ENCODE measurements at regions of chr5 and their contacts with region 1.

Region 1: GRCh38 chr5:77963795-77964194 is 187.7 kb upstream of the TBCA start:
- DNase-seq: no peak
- H3K4me3 ChIP-seq: no peak overlapping the region
- H3K27ac ChIP-seq: no peak overlapping the region
- H3K4me1 ChIP-seq: no peaks in the 10 kb centered on the region
- H3K27me3 ChIP-seq: no peaks in the 10 kb centered on the region
- CTCF ChIP-seq: no peak
- POLR2A ChIP-seq: no peak

Region 2: DNA sequence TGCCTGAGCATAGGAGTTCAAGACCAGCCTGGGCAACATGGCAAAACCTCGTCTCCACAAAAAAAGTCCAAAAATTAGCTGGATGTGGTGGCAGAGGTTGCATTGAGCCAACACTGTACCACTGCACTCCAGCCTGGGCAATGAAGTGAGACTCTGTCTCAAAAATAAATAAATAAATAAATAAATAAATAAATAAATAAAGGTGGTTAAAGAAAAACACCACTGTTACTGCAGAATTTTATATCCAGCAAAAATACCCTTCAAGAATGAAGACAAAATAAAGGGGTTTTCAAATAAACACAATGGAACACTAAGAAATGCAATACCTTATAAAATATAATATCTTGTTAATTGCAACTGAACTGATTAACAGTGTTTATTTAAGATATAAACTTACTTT is 37.5 kb before region 1 on chr5:
- intact Hi-C with region 1: loop called (anchors 2 kb)
- DNase-seq: no peak
- H3K4me3 ChIP-seq: no peak overlapping the region
- H3K27ac ChIP-seq: no peak overlapping the region
- H3K4me1 ChIP-seq: no peaks in the 10 kb centered on the region
- H3K27me3 ChIP-seq: no peaks in the 10 kb centered on the region
- CTCF ChIP-seq: no peak
- POLR2A ChIP-seq: no peak

Measured in breast epithelium (tissue), 4 donors.